ENCODE measurements at regions of chr5 and their contacts with region 1.

Region 1: DNA sequence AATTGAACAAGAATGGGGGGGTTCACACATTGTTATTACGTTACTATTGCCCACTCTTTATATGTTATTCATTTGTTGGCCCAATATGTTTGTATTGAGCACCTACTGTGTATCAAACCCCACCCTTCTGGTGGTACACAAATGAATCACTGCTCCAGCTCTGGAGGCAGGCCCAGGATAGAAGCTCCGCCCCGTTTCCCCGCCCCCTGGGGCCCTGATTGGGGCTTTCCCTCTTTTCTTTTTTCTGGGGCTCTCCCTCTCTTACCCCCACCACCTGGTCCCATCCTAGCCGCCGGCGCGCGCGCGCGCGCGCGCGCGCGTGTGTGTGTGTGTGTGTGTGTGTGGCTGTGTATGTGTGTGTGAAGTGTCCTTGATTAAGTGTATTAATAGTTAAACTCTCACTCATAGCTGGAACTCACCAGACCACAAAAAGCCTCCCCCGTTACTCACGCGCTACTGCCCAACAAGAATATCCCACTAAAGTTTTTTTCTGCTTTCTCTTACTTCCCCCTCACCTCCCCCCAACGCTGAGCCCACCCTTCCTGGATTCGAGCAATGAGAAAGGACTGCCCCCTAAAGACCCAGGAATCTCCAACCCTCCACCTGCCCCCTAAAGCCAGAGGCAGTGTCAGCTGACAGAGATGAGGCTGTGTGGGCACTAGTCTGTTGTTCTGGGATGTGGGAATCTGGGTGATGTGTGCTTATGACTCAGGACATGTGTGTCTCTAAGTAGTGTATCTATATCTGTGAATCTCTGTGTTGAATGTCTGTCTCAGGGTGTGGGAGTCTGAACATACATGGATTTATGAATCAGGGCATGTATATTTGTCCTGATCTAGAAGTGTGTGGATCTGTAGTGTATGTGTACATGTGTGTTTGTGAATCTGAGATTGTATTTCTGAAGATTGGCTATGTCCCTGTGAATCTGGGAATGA is 4.0 kb downstream of the CXXC5 start:
- DNase-seq: peak; percentile 50
- H3K4me3 Mint-ChIP-seq: peak overlapping the region; percentile 4
- H3K27ac Mint-ChIP-seq: no peak overlapping the region
- H3K4me1 Mint-ChIP-seq: peaks cover 26% of the 10 kb centered on the region
- H3K27me3 Mint-ChIP-seq: peaks cover 47% of the 10 kb centered on the region

Region 2: DNA sequence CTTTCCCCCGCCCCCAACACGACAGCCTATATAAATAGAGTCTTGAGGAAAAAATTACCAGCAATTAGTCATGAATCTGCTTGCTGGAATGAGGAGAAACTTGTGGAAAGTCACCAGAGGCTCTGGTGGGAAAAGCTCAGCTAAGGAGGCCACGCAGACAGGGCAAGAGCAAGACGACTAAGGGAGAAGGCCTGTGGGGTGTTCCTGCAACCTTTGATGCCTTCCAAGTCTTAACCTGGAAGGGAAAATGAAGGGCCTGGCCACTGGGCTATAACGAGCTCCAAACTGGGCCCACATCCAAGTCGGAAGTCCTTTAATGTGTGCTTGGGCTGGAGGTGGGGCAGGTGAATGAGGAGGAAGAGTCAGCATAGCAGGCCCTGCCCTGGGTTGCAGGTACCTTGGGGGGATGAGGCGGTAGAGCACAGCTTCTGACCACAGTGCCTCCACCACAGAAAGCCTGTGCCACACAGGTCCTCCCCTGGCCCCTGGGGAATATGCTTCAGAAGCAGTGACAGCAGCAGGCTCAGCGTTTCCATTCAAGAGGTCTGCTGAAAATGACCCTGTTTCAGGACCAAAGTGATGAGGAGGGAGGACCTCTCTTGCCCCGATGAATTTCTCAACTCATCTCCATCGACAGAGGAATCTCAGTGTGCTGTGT is 684.2 kb before region 1 on chr5:
- intact Hi-C with region 1: no loop called
- DNase-seq: no peak
- H3K4me3 Mint-ChIP-seq: no peak overlapping the region
- H3K27ac Mint-ChIP-seq: no peak overlapping the region
- H3K4me1 Mint-ChIP-seq: no peaks in the 10 kb centered on the region
- H3K27me3 Mint-ChIP-seq: no peaks in the 10 kb centered on the region

Region 3: DNA sequence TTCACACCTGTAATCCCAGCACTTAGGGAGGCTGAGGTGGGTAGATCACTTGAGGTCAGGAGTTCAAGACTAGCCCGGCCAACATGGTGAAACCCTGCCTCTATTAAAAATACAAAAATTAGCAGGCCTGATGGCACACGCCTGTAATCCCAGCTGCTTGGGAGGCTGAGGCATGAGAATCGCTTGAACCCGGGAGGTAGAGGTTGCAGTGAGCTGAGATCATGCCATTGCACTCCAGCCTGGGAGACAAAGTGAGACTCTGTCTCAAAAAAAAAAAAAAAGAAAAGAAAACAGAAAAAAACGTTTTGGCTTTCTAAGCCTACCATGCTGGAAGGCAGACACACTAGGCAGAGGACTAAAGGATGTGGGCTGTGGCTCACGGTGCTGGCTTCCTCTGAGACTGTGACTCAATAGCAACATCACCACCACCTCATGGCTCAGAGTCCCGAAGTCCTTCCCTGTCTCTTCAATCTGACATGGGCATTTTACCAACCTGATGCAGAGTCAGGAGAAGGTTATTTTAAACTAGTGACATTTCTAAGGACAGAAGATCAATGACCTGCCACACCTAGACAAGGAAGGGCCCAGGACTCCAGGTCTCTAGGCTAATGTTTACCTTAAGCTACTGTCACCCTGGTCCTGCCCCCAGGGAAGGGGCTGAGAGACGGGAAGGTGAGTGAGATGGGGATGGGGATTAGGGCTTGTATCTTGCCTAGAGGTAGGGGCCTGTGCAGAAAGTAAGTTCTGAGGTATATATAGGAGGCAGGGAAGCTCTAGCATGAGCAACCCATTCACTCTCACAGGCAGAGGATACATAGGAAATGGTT is 193.3 kb before region 1 on chr5:
- intact Hi-C with region 1: no loop called
- DNase-seq: peak; percentile 80
- H3K4me3 Mint-ChIP-seq: peak overlapping the region; percentile 81
- H3K27ac Mint-ChIP-seq: peak overlapping the region; percentile 99
- H3K4me1 Mint-ChIP-seq: peaks cover 72% of the 10 kb centered on the region
- H3K27me3 Mint-ChIP-seq: no peaks in the 10 kb centered on the region

Region 4: DNA sequence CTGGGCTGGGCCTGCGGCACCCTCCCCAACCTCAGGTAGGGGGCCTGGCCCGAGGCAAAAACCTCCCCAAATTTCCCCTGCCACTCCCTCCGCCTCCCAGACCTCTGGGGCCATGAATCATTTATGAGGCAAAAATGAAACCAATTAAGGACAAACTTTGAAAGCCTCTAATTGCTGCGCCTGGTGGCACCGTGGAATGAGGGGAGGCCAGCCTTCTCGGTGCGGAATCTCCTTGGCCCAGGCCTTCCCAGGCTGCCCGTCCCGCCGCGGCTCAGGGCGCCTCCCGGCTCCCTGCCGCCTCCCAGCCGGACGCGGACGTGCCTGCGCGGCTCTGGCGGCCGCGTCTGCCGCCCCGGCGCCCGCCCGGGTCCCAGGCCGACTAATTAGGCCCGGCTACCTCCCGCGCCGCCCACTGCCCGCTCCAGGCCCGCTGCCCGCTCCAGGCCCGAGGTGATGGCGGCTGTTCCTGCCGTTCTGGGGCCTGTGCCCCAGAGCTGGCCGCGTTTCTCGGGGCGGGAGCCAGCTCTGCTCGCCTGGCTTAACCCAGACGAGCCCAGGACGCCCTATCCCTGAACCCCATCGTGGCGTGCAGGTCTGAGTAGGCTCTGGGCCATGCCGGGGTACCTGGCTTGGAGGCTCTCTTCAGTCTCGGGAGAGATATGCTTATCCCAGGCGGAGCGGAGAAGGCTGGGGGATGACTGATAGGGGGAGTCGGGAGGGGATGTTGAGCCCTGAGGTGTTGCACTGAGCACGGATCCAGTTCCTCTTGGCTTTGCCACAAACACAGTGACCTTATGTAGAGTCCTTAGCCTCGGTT is 16.2 kb after region 1 on chr5:
- intact Hi-C with region 1: loop called (anchors 1 kb)
- DNase-seq: peak; percentile 22
- H3K4me3 Mint-ChIP-seq: peak overlapping the region; percentile 69
- H3K27ac Mint-ChIP-seq: no peak overlapping the region
- H3K4me1 Mint-ChIP-seq: peaks cover 39% of the 10 kb centered on the region
- H3K27me3 Mint-ChIP-seq: peaks cover 9% of the 10 kb centered on the region

Region 5: DNA sequence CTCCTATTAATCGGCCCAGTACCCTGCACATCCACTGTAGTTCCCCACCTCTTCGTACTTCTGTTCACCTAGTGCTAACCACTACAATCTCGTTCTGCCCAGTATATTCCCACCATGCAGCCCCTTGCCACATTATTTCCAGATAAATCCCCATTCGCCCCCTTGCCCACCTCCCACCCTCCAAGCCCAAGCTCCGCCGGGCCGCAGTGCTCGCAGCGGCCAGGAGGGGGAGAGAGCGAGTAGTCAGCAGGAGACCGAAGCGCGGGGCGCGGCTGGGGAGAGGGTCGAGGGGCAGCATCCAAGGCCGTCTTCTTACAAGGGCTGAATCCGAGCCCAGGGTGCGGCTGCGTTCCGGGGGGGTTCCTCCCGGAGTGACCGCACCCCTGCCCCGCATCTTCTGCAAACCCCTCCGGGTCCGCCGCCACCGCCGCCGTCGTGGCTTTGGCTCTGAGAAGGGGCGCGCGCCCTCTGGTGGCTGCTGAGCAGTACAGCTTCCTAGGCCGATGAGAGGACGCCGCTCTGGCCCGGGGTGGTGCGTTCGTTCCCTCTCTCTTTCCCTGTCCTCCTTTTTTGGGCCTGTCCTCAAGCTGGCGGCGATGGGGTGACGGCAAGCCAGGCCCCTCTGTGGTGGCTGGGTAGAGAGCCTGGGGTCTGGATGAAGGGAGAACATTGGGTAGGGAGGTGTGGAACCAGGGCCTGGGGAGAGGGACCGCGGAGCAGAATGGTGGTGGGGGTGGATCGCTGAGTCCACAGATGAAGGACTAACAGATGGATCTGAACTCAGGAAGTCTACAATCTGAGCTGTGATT is 113.5 kb after region 1 on chr5:
- intact Hi-C with region 1: loop called (anchors 1 kb)
- DNase-seq: peak; percentile 68
- H3K4me3 Mint-ChIP-seq: peak overlapping the region; percentile 75
- H3K27ac Mint-ChIP-seq: peak overlapping the region; percentile 47
- H3K4me1 Mint-ChIP-seq: peaks cover 14% of the 10 kb centered on the region
- H3K27me3 Mint-ChIP-seq: peaks cover 46% of the 10 kb centered on the region